PC-9 (cell line): ENCODE measurements at regions of chr11 and their contacts with region 1.

Region 1: GRCh38 chr11:73570415-73571114 is 27.3 kb downstream of the FAM168A start:
- DNase-seq: peak; percentile 51 to 62
- H3K4me3 ChIP-seq: no peak overlapping the region
- H3K27ac ChIP-seq: peak overlapping the region; percentile 11; the same call in 1 of the 2 replicates
- H3K4me1 ChIP-seq: no peaks in the 10 kb centered on the region
- H3K27me3 ChIP-seq: no peaks in the 10 kb centered on the region
- CTCF ChIP-seq: no peak

Region 2: DNA sequence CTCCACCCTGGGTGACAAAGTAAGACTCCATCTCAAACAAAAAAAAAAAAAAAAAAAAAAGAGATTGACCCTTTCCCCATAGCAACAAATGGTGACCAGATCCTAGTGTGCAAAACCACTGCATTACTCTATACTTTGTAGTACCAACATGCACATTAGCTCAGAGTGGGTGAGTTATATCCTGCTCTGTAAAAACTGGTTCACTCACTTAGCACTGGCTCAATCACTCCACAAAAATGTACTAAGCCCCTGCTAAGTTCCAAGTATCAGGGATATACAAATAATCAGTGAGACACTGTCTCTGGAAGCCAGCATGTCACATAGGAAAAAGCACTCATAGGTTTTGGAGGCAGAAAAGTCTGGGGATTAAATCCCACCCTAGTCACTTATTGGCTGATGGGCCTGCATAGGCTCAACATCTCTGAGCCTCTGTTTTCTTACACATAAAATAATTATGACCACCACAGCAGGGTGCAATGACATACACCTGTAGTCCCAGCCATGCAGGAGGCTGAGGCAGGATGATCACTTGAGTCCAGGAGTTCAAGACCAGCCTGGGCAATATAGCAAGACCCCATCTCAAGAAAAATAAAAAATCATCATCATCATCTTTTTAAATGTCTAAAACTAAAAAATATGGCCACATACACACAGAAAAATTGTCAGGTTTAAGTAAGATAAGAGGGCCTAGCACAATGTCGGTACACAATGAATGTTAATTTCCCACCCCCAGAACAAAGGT is 15.4 kb after region 1 on chr11:
- CTCF ChIA-PET with region 1: no interaction called
- POLR2A ChIA-PET with region 1: interaction called, 21 read pairs
- intact Hi-C with region 1: no loop called
- DNase-seq: peak in 1 of 2 experiments; percentile 28
- H3K4me3 ChIP-seq: no peak overlapping the region
- H3K27ac ChIP-seq: no peak overlapping the region
- H3K4me1 ChIP-seq: no peaks in the 10 kb centered on the region
- H3K27me3 ChIP-seq: no peaks in the 10 kb centered on the region
- CTCF ChIP-seq: no peak

Region 3: DNA sequence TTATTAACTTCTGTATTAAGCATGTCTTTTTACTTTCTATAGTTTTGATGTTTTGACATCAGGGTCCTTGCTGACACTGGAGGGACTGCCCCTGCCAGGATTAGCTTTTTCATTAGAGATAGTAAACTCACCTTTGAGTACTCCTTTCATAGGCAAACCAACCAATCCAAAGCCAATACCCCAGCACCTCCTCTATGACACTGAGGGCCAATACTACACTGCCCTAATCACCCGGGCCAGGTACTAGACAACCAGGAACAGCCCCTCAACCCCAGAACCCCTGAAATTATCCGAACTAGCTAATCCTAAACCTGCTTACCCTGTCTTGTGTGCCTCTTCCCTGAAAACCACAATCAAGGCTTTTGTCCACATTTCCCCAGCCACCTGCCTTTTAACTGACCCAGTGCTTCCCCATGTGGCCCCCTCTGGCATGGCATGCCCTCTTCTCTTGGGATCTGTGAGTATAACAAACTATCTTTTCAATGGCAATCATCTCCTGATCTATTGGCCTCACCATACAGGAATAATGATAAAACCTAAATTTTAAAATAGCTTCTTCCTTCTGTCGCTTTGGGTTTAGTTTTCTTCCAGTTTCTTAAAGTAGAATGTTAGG is 159.1 kb after region 1 on chr11:
- CTCF ChIA-PET with region 1: no interaction called
- POLR2A ChIA-PET with region 1: interaction called, 47 read pairs
- intact Hi-C with region 1: no loop called
- DNase-seq: peak in 1 of 2 experiments; percentile 7
- H3K4me3 ChIP-seq: no peak overlapping the region
- H3K27ac ChIP-seq: no peak overlapping the region
- H3K4me1 ChIP-seq: no peaks in the 10 kb centered on the region
- H3K27me3 ChIP-seq: no peaks in the 10 kb centered on the region
- CTCF ChIP-seq: peak; percentile 66

Region 4: DNA sequence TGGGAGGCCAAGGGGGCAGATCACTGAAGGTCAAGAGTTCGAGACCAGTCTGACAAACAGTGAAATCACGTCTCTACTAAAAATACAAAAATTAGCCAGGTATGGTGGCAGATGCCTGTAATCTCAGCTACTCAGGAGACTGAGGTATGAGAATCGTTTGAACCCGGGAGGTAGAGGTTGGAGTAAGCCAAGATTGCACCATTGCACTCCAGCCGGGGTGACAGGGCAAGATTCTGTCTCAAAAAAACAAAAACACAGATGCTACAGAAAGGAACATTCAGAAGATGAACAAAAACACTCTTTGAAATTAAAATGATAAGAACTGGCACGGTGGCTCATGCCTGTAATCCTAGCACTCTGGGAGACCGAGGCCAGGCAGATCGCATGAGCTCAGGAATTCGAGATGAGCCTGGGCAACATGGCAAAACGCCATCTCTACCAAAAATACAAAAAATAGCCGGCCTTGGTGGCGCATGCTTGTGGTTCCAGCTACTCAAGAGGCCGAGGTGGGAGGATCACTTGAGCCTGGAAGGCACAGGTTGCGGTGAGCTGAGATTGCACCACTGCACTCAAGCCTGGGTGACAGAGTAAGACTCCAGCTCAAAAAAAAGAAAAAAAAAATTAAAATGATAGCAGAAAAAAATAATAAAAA is 181.8 kb after region 1 on chr11:
- CTCF ChIA-PET with region 1: no interaction called
- POLR2A ChIA-PET with region 1: no interaction called
- intact Hi-C with region 1: no loop called
- DNase-seq: no peak
- H3K4me3 ChIP-seq: no peak overlapping the region
- H3K27ac ChIP-seq: no peak overlapping the region
- H3K4me1 ChIP-seq: 0 out of 2 replicates have a peak, but pooled peaks cover 2% of the 10 kb centered on the region
- H3K27me3 ChIP-seq: no peaks in the 10 kb centered on the region
- CTCF ChIP-seq: no peak